MCF 10A (cell line): ENCODE measurements at regions of chr5 and their contacts with region 1.

Region 1: GRCh38 chr5:157994906-157995519 is 136.1 kb upstream of the CLINT1 start:
- DNase-seq: peak; percentile 84
- H3K4me3 Mint-ChIP-seq: no peak overlapping the region
- H3K27ac Mint-ChIP-seq: no peak overlapping the region
- H3K4me1 Mint-ChIP-seq: peaks cover 10% of the 10 kb centered on the region
- H3K27me3 Mint-ChIP-seq: no peaks in the 10 kb centered on the region
- CTCF ChIP-seq: peak; percentile 85

Region 2: GRCh38 chr5:157812086-157812485 is 182.9 kb before region 1 on chr5:
- CTCF ChIA-PET with region 1: interaction called, 53 read pairs
- POLR2A ChIA-PET with region 1: interaction called, 3 read pairs
- intact Hi-C with region 1: loop called (anchors 1 kb)
- DNase-seq: no peak
- H3K4me3 Mint-ChIP-seq: no peak overlapping the region
- H3K27ac Mint-ChIP-seq: no peak overlapping the region
- H3K4me1 Mint-ChIP-seq: no peaks in the 10 kb centered on the region
- H3K27me3 Mint-ChIP-seq: no peaks in the 10 kb centered on the region
- CTCF ChIP-seq: no peak

Region 3: GRCh38 chr5:157820593-157821252 is 174.3 kb before region 1 on chr5:
- CTCF ChIA-PET with region 1: interaction called, 53 read pairs
- POLR2A ChIA-PET with region 1: interaction called, 4 read pairs
- intact Hi-C with region 1: loop called (anchors 1 kb)
- DNase-seq: peak; percentile 68
- H3K4me3 Mint-ChIP-seq: no peak overlapping the region
- H3K27ac Mint-ChIP-seq: peak overlapping the region; percentile 61
- H3K4me1 Mint-ChIP-seq: peaks cover 21% of the 10 kb centered on the region
- H3K27me3 Mint-ChIP-seq: no peaks in the 10 kb centered on the region
- CTCF ChIP-seq: peak; percentile 68

Region 4: GRCh38 chr5:157917899-157918809 is 76.9 kb before region 1 on chr5:
- CTCF ChIA-PET with region 1: interaction called, 7 read pairs
- POLR2A ChIA-PET with region 1: no interaction called
- intact Hi-C with region 1: loop called (anchors 2 kb)
- DNase-seq: peak; percentile 90
- H3K4me3 Mint-ChIP-seq: no peak overlapping the region
- H3K27ac Mint-ChIP-seq: peak overlapping the region; percentile 38
- H3K4me1 Mint-ChIP-seq: peaks cover 32% of the 10 kb centered on the region
- H3K27me3 Mint-ChIP-seq: no peaks in the 10 kb centered on the region
- CTCF ChIP-seq: peak; percentile 82

Region 5: GRCh38 chr5:157930710-157931109 is 64.3 kb before region 1 on chr5:
- CTCF ChIA-PET with region 1: interaction called, 10 read pairs
- POLR2A ChIA-PET with region 1: no interaction called
- intact Hi-C with region 1: no loop called
- DNase-seq: no peak
- H3K4me3 Mint-ChIP-seq: no peak overlapping the region
- H3K27ac Mint-ChIP-seq: no peak overlapping the region
- H3K4me1 Mint-ChIP-seq: no peaks in the 10 kb centered on the region
- H3K27me3 Mint-ChIP-seq: no peaks in the 10 kb centered on the region
- CTCF ChIP-seq: no peak

Region 6: GRCh38 chr5:158013939-158014338 is 18.9 kb after region 1 on chr5:
- CTCF ChIA-PET with region 1: interaction called, 14 read pairs
- POLR2A ChIA-PET with region 1: interaction called, 4 read pairs
- intact Hi-C with region 1: no loop called
- DNase-seq: peak; percentile 64
- H3K4me3 Mint-ChIP-seq: no peak overlapping the region
- H3K27ac Mint-ChIP-seq: no peak overlapping the region
- H3K4me1 Mint-ChIP-seq: no peaks in the 10 kb centered on the region
- H3K27me3 Mint-ChIP-seq: no peaks in the 10 kb centered on the region
- CTCF ChIP-seq: peak; percentile 68

Region 7: GRCh38 chr5:158054223-158055110 is 59.5 kb after region 1 on chr5:
- CTCF ChIA-PET with region 1: interaction called, 3 read pairs
- POLR2A ChIA-PET with region 1: interaction called, 6 read pairs
- intact Hi-C with region 1: loop called (anchors 2 kb)
- DNase-seq: peak; percentile 21
- H3K4me3 Mint-ChIP-seq: peak overlapping the region; percentile 19
- H3K27ac Mint-ChIP-seq: peak overlapping the region; percentile 55
- H3K4me1 Mint-ChIP-seq: peaks cover 55% of the 10 kb centered on the region
- H3K27me3 Mint-ChIP-seq: no peaks in the 10 kb centered on the region
- CTCF ChIP-seq: no peak